ENCODE measurements at regions of chr11 and their contacts with region 1.

Region 1: DNA sequence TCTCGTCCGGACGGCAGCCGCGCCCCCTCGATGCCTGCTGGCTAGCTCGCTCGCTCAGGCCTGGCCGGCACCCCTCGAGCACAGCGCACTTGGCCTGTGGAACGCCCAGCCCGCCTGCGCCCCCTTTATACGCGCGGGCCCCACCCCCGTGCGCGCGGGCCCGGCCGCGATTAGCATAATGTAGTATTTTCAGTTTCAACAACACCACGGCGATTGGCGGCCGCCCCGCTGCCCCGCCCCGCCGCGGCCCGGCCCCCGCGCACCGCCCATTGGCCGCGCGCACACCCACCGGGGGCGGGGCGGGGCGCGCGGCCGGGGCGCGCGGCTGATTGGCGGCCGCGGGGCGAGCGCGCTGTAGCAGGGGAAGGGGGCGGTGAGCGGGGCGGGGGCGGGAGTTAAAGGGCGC is at the start of gene CDKN1C:
- DNase-seq: peak; percentile 97
- H3K4me3 ChIP-seq: peak within 1 kb of the TSS; percentile 72 to 98 (median 92)
- H3K27ac ChIP-seq: peak within 1 kb of the TSS; percentile 91 to 96 (median 94)
- H3K4me1 ChIP-seq: peaks cover 0 to 56% (median 44%) of the 10 kb centered on the region in 4 donors
- H3K27me3 ChIP-seq: no peaks in the 10 kb centered on the region
- CTCF ChIP-seq: no peak
- EP300 ChIP-seq: no peak
- POLR2A ChIP-seq: peak; percentile 87 to 91
- total RNA-seq, gene CDKN1C: 37.2 to 54.3 (median 47.4) TPM

Region 2: DNA sequence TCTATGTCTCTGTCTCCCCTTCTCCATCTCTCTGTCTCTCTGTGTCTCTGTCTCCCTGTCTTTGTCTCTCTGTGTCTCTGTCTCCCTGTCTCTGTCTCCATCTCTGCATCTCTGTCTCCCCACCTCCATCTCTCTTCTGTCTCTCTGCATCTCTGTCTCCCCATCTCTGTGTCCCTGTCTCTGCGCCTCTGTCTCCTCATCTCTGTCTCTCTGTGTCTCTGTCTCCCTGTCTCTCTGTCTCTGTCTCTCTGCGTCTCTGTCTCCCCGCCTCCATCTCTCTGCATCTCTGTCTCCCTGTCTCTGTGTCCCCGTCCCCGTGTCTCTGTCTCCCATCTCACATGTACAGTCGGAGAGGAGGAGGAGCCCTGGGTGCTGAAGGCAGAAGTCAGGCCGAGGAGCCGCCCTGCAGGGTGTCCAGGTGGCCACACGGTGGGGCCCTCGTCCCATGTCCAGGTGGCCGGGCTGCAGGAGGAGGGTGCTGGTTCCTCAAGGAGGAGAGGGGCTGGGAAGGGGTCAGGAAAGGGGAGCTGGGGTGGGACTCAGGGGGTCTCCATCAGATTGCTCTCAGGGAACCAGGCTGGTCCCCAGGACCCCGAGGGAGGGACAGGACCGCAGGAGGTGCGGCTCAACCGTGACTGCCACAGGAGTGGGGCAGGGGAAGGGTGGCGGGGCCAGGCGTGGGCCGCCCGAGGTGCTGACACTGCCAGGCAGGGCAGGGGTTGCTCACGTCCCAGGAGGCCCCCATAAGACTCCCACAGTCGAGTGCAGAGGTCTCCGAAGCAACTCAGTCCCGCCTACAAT is 688.5 kb before region 1 on chr11:
- intact Hi-C with region 1: loop called (anchors 5 kb)
- DNase-seq: peak; percentile 86
- H3K4me3 ChIP-seq: no peak overlapping the region
- H3K27ac ChIP-seq: no peak overlapping the region
- H3K4me1 ChIP-seq: no peaks in the 10 kb centered on the region
- H3K27me3 ChIP-seq: peaks cover 0 to 25% (median 0%) of the 10 kb centered on the region in 3 donors
- CTCF ChIP-seq: peak; percentile 88 to 94 (median 89)
- EP300 ChIP-seq: no peak
- POLR2A ChIP-seq: no peak

Region 3: GRCh38 chr11:2532704-2533586 is 352.7 kb before region 1 on chr11:
- intact Hi-C with region 1: loop called (anchors 1 kb)
- DNase-seq: peak; percentile 95
- H3K4me3 ChIP-seq: peak overlapping the region in 3 of 4 donors; percentile 13 to 38 (median 32)
- H3K27ac ChIP-seq: peak overlapping the region in 2 of 4 donors; percentile 2 to 64
- H3K4me1 ChIP-seq: peaks cover 0 to 21% (median 17%) of the 10 kb centered on the region in 4 donors
- H3K27me3 ChIP-seq: peaks cover 0 to 3% (median 0%) of the 10 kb centered on the region in 3 donors
- CTCF ChIP-seq: peak; percentile 99 to 100 (median 99)
- EP300 ChIP-seq: no peak
- POLR2A ChIP-seq: no peak

Region 4: GRCh38 chr11:2612884-2613571 is 272.7 kb before region 1 on chr11:
- intact Hi-C with region 1: no loop called
- DNase-seq: no peak
- H3K4me3 ChIP-seq: no peak overlapping the region
- H3K27ac ChIP-seq: no peak overlapping the region
- H3K4me1 ChIP-seq: no peaks in the 10 kb centered on the region
- H3K27me3 ChIP-seq: no peaks in the 10 kb centered on the region
- CTCF ChIP-seq: no peak
- EP300 ChIP-seq: no peak
- POLR2A ChIP-seq: no peak

Region 5: DNA sequence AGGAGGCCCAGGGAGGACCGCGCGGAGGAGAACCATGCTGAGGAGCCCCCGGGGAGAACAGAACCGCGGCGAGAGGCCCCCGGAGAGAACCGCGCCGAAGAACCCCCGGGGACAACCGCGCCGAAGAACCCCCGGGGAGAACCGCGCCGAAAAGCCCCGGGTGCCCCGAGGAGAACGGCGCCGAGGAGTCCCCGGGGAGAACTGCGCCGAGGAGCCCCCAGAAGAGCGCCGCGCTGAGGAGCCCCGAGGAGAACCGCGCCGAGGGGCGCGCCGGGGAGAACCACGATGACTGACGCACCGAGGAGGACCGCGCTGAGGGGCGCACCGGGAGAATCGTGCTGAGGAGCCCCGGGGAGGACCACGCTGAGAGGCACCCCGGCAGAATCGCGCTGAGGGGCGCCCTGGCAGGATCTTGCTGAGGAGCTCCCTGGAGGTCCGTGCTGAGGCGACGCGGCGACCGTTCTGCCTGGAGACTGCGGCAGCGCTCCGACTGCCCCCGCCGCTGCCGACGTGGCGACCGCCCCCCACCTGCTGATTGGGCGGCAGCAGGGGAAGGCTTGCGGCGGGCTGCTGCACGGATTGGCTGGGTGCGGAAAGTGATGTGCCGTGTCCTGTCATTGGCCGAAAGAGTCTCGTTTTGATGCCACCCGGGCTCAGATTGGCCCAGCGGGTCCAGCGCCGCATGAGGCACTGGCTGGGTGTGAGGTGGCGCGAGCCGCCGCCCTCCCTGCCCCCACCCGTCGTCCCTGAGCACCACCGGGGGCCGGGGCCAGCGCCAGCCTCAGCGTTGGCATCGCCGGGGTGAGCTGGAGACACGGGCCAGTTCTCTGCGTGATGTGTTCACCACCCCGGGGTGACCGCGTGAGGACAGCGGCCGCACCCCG is 185.9 kb before region 1 on chr11 and contains the start of gene KCNQ1OT1:
- intact Hi-C with region 1: loop called (anchors 2 kb)
- DNase-seq: peak; percentile 97
- H3K4me3 ChIP-seq: peak within 1 kb of the TSS; percentile 60 to 75 (median 70)
- H3K27ac ChIP-seq: peak within 1 kb of the TSS; percentile 85 to 95 (median 92)
- H3K4me1 ChIP-seq: peaks cover 0 to 29% (median 4%) of the 10 kb centered on the region in 4 donors
- H3K27me3 ChIP-seq: no peaks in the 10 kb centered on the region
- CTCF ChIP-seq: no peak
- EP300 ChIP-seq: no peak
- POLR2A ChIP-seq: peak; percentile 90 to 92
- total RNA-seq, gene KCNQ1OT1: 0.99 to 3.6 (median 1.4) TPM

Region 6: DNA sequence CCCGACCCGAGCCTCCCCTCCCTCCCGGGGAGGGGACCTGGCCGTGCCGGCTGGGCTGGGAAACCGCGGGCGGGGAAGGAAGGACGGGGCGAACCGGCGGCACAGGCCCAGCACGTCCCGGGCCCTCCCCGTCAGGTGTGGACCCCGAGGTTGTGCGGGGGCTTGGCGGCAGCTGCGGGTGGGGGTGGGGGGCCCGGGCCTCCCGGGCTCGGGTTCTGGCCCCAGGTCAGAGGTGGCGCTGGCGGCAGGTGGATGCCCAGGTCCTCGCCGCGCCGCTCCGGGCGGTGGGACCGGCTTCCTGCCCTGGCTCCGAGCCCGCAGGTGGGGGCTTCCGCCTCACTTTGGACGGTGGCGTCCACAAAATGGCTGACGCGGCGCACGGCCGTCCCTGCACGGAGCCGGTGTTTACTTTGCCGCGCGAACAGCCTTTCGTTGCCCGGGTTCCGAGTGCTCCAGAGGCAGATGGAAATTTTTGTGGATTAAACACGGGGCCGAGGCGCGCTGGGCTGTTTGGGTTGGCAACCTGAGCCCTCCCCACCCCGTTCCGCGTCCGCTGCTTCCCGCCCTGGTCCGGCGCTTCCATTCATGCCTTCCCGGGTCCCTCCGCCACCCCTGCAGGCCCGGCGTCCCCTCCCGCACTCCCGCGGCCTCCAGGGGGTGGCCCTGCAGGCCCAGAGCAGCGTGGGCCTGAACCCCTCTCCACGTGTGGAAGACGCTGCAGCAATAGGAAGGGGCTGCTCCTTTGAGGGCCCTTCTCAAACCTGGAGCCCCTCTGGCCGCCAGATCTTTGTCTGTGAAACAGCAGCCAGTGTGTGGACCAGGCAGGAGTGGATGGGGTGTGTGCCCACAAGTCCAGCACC is 93.9 kb before region 1 on chr11:
- intact Hi-C with region 1: no loop called
- DNase-seq: peak; percentile 62
- H3K4me3 ChIP-seq: peak overlapping the region; percentile 25 to 59 (median 48)
- H3K27ac ChIP-seq: peak overlapping the region; percentile 25 to 70 (median 52)
- H3K4me1 ChIP-seq: peaks cover 0 to 12% (median 10%) of the 10 kb centered on the region in 4 donors
- H3K27me3 ChIP-seq: no peaks in the 10 kb centered on the region
- CTCF ChIP-seq: no peak
- EP300 ChIP-seq: no peak
- POLR2A ChIP-seq: no peak

Region 7: DNA sequence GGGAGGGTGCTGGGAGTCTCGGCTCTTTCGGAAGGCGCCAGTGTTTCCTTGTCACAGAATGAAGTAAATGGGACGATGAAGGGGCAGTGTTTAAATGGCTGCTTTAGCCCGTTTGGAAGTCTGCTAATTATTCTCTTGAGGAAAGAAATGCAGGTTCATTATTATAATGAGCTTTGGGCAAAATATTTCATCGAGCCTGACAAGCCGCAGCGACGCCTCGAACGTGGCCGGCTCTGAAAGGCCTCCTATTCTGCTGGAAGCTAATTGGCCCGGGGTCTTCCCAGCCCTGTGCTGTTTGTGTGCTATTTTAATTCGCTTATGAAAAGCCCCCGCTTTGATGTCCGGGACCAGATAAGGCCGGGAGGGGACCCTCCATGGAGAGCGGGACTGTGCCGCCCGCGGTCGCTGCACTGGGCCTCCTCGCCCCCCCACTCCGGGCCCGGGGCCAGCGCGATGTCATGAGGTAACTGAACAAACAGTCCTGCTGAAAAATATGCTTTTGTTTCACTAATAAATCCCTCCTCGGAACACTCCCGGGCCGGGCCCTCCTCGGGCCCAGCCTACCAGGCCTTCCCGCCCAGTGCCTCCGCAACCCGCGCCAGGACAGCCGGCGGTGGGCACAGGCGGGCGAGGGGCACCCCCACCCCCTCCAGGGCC is 78.5 kb before region 1 on chr11:
- intact Hi-C with region 1: loop called (anchors 5 kb)
- DNase-seq: peak; percentile 96
- H3K4me3 ChIP-seq: peak overlapping the region in 3 of 4 donors; percentile 7 to 28 (median 14)
- H3K27ac ChIP-seq: peak overlapping the region; percentile 78 to 86 (median 81)
- H3K4me1 ChIP-seq: peaks cover 0 to 45% (median 40%) of the 10 kb centered on the region in 4 donors
- H3K27me3 ChIP-seq: no peaks in the 10 kb centered on the region
- CTCF ChIP-seq: no peak
- EP300 ChIP-seq: peak in 2 of 4 donors; percentile 35 to 79
- POLR2A ChIP-seq: no peak

Region 8: GRCh38 chr11:2837096-2837601 is 48.5 kb before region 1 on chr11:
- intact Hi-C with region 1: loop called (anchors 2 kb)
- DNase-seq: peak; percentile 93
- H3K4me3 ChIP-seq: no peak overlapping the region
- H3K27ac ChIP-seq: peak overlapping the region in 2 of 4 donors; percentile 36 to 37
- H3K4me1 ChIP-seq: peaks cover 0 to 14% (median 11%) of the 10 kb centered on the region in 4 donors
- H3K27me3 ChIP-seq: no peaks in the 10 kb centered on the region
- CTCF ChIP-seq: peak; percentile 29 to 49 (median 44)
- EP300 ChIP-seq: no peak
- POLR2A ChIP-seq: no peak